Right ventricle myocardium inferior (tissue), 1 donor: ENCODE measurements at regions of chr12 and their contacts with region 1.

Region 1: DNA sequence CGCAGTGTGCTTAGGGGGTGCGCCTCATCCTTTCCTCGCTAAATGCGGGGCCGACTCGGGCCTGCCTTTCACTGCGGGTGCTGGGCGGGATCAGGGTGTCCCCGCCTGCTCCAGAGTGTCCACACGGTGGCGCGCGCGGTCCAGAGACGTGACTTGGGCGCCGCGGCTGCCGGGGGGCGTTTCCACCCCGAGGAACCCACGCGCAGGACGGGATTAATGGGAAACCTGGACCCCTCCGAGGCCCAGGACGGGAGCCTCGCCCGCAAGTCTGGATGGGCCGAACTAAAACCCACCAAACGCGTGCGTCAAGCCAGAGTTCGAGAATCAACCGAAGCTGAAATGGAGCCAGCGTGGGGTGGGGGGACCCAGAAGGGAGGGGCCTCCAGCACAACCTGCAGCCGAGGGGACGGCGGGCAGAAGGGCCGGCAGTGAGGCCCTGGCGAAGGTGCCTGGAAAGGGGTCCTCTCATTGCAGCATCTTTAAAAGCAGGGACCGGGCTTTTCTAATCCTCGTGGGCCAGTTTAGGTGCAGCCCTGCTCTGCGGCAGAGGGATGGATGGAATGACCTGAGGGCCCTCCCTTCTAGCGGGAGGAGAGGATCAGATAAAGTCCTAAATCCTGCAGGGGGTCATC is 93.3 kb downstream of the NINJ2 start:
- DNase-seq: peak; percentile 96
- ATAC-seq: peak; percentile 75

Region 2: GRCh38 chr12:414859-415258 is 155.1 kb before region 1 on chr12:
- intact Hi-C with region 1: no loop called
- DNase-seq: no peak
- ATAC-seq: no peak

Region 3: GRCh38 chr12:868722-869121 is 298.8 kb after region 1 on chr12:
- intact Hi-C with region 1: loop called (anchors 5 kb)
- DNase-seq: no peak
- ATAC-seq: no peak